PC-3 (cell line): ENCODE measurements at regions of chr10 and their contacts with region 1.

Region 1: DNA sequence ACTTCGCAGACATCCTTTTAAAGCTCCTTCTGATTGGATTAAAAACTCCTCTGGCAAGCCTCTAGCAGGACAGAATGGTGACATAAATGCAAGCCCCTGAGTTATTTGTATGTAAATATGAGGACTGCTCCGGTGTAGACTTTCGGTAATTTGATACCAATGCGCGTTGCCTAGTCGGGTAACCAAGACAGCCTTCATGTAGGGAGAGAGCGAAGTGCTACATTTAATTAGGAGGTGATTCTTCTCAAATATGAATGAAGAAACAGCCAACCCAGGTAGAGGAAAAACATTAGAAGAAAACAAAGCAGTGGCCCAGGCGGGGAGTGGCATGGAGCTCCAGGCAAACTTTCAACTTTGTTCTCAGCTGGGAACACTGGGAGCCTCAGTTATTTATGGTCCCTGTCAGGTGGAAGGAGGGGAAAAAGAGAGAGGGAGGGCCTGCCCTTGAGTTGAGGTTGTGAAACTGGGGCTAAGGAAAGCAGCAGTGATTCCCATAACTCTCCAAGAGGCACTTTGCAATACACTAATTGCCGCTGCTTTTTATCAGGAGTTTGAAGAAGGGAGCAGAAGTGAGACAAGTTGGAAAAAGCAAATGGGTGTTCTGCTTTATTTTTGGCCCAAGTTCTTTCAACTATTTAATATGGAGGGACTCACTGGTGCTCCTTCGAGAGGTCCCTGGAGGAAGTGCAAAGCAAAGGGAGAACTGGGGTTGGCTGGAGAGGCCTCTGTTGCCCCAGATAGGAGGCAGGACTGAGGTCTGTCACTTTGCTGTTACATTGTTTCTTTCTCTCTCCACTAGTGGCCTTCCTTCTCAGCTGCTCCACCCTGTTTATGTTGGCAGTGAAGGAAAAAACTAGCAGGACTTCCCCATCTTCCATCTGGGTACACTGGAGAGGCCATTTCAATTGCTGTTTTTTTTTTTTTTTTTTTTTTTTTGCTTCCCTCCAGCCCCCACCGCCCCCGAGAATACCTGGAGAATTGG is 234.6 kb upstream of the CCDC6 start:
- DNase-seq: peak; percentile 81
- ATAC-seq: peak; percentile 81
- H3K4me3 ChIP-seq: peak overlapping the region; percentile 59
- H3K27ac ChIP-seq: peak overlapping the region; percentile 88
- H3K4me1 ChIP-seq: peaks cover 70% of the 10 kb centered on the region
- H3K27me3 ChIP-seq: no peaks in the 10 kb centered on the region
- CTCF ChIP-seq: 0 out of 2 replicates have a peak, but pooled peaks have one; percentile 7

Region 2: GRCh38 chr10:60123172-60124067 is 17.5 kb before region 1 on chr10:
- CTCF ChIA-PET with region 1: no interaction called
- POLR2A ChIA-PET with region 1: interaction called, 3 read pairs
- intact Hi-C with region 1: loop called (anchors 1 kb)
- DNase-seq: peak; percentile 99
- ATAC-seq: peak; percentile 99
- H3K4me3 ChIP-seq: peak overlapping the region; percentile 23
- H3K27ac ChIP-seq: peak overlapping the region; percentile 93
- H3K4me1 ChIP-seq: peaks cover 27% of the 10 kb centered on the region
- H3K27me3 ChIP-seq: no peaks in the 10 kb centered on the region
- CTCF ChIP-seq: no peak

Region 3: GRCh38 chr10:60237977-60238758 is 97.2 kb after region 1 on chr10:
- CTCF ChIA-PET with region 1: no interaction called
- POLR2A ChIA-PET with region 1: no interaction called
- intact Hi-C with region 1: no loop called
- DNase-seq: peak; percentile 89
- ATAC-seq: peak; percentile 99
- H3K4me3 ChIP-seq: peak overlapping the region; percentile 66
- H3K27ac ChIP-seq: 0 out of 2 replicates have a peak overlapping the region, but pooled peaks have one; percentile 3
- H3K4me1 ChIP-seq: peaks cover 25% of the 10 kb centered on the region
- H3K27me3 ChIP-seq: no peaks in the 10 kb centered on the region
- CTCF ChIP-seq: peak; percentile 96